Calu3 (cell line): ENCODE measurements at regions of chr6 and their contacts with region 1.

Region 1: GRCh38 chr6:166627033-166627874 is at the start of gene RPS6KA2:
- DNase-seq: peak; percentile 99
- H3K4me3 Mint-ChIP-seq: peak within 1 kb of the TSS; percentile 94
- H3K27ac Mint-ChIP-seq: peak within 1 kb of the TSS; percentile 82
- H3K4me1 Mint-ChIP-seq: peaks cover 39% of the 10 kb centered on the region
- H3K27me3 Mint-ChIP-seq: peaks cover 17% of the 10 kb centered on the region
- CTCF ChIP-seq: no peak
- total RNA-seq, gene RPS6KA2: 25.8 and 41.3 TPM in 2 replicates

Region 2: GRCh38 chr6:166275714-166276166 is 351.5 kb before region 1 on chr6:
- CTCF ChIA-PET with region 1: no interaction called
- intact Hi-C with region 1: loop called (anchors 10 kb)
- DNase-seq: peak; percentile 89
- H3K4me3 Mint-ChIP-seq: no peak overlapping the region
- H3K27ac Mint-ChIP-seq: no peak overlapping the region
- H3K4me1 Mint-ChIP-seq: peaks cover 10% of the 10 kb centered on the region
- H3K27me3 Mint-ChIP-seq: peaks cover 38% of the 10 kb centered on the region
- CTCF ChIP-seq: peak; percentile 93

Region 3: DNA sequence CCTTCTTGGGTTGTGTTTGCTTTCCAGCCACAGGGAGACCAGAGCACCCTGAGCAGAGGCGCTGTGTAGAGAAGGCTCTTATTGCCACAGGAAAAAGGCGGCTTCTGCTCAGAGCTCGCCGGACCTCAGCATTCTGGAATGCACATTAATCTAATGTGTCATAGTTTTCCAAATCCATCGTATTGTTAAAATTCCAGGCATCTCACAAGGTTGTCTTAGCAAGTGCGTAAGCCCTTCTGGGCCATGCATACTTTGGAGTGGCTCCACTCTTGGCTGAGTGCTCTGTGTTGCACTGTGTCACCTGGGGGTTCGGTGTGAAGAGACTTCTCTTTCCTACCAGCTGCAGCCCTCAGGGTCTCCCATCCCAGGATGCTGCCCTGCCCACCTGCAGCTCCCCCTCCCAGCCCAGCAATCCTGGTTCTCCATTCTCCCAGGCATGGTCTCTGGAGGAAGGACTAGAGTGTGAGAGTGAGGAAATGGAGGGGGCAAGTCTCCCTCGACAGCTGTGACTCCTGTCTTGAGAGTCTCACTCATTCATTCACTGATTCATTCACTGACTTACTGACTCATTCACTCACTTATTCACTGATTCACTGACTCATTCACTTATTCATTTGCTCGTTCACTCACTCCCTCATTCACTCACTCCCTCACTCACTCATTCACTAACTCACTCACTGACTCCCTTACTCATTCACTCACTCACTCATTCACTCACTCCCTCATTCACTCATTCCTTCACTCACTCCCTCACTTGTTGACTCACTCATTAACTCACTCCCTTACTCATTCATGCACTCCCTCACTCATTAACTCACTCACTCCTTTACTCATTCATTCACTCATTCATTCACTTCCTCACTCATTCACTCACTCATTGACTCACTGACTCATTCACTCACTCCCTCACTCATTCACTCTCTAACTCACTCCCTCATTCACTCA is 160.8 kb before region 1 on chr6:
- CTCF ChIA-PET with region 1: no interaction called
- intact Hi-C with region 1: no loop called
- DNase-seq: no peak
- H3K4me3 Mint-ChIP-seq: no peak overlapping the region
- H3K27ac Mint-ChIP-seq: no peak overlapping the region
- H3K4me1 Mint-ChIP-seq: peaks cover 9% of the 10 kb centered on the region
- H3K27me3 Mint-ChIP-seq: no peaks in the 10 kb centered on the region
- CTCF ChIP-seq: no peak

Region 4: GRCh38 chr6:166490671-166491500 is 136.4 kb before region 1 on chr6:
- CTCF ChIA-PET with region 1: interaction called, 7 read pairs
- intact Hi-C with region 1: loop called (anchors 1 kb)
- DNase-seq: peak; percentile 71
- H3K4me3 Mint-ChIP-seq: no peak overlapping the region
- H3K27ac Mint-ChIP-seq: no peak overlapping the region
- H3K4me1 Mint-ChIP-seq: peaks cover 25% of the 10 kb centered on the region
- H3K27me3 Mint-ChIP-seq: no peaks in the 10 kb centered on the region
- CTCF ChIP-seq: no peak

Region 5: GRCh38 chr6:166540631-166541331 is 86.5 kb before region 1 on chr6:
- CTCF ChIA-PET with region 1: interaction called, 4 read pairs
- intact Hi-C with region 1: loop called (anchors 5 kb)
- DNase-seq: peak; percentile 43
- H3K4me3 Mint-ChIP-seq: peak overlapping the region; percentile 69
- H3K27ac Mint-ChIP-seq: peak overlapping the region; percentile 31
- H3K4me1 Mint-ChIP-seq: peaks cover 30% of the 10 kb centered on the region
- H3K27me3 Mint-ChIP-seq: no peaks in the 10 kb centered on the region
- CTCF ChIP-seq: no peak

Region 6: DNA sequence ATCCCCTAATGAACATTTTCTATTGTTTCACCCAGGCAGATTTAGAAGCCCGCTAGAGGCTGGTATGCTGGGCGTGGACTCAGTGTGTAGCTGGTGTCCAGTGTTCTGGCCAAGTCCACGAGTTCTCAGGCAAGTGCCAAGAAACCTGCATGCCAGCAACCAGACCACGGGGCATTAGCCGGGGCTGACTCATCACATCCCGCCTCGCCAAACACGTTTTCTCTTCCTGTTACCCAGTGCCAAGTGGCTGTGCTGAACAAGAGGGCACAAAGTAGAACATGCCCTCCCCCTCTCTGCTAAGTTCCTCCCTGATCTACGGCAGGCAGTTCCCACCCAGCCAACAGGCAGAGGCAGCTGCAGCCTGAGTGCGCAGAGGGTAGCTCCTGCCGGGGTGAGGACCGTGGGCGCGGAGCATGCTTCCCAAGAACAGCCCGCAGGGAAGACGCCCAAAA is 70.4 kb before region 1 on chr6:
- CTCF ChIA-PET with region 1: interaction called, 7 read pairs
- intact Hi-C with region 1: loop called (anchors 2 kb)
- DNase-seq: peak; percentile 94
- H3K4me3 Mint-ChIP-seq: peak overlapping the region; percentile 47
- H3K27ac Mint-ChIP-seq: peak overlapping the region; percentile 81
- H3K4me1 Mint-ChIP-seq: peaks cover 53% of the 10 kb centered on the region
- H3K27me3 Mint-ChIP-seq: no peaks in the 10 kb centered on the region
- CTCF ChIP-seq: no peak

Region 7: GRCh38 chr6:166736634-166737033 is 109.4 kb after region 1 on chr6:
- CTCF ChIA-PET with region 1: no interaction called
- intact Hi-C with region 1: loop called (anchors 2 kb)
- DNase-seq: peak; percentile 45
- H3K4me3 Mint-ChIP-seq: peak overlapping the region; percentile 38
- H3K27ac Mint-ChIP-seq: peak overlapping the region; percentile 91
- H3K4me1 Mint-ChIP-seq: peaks cover 33% of the 10 kb centered on the region
- H3K27me3 Mint-ChIP-seq: no peaks in the 10 kb centered on the region
- CTCF ChIP-seq: no peak

Region 8: DNA sequence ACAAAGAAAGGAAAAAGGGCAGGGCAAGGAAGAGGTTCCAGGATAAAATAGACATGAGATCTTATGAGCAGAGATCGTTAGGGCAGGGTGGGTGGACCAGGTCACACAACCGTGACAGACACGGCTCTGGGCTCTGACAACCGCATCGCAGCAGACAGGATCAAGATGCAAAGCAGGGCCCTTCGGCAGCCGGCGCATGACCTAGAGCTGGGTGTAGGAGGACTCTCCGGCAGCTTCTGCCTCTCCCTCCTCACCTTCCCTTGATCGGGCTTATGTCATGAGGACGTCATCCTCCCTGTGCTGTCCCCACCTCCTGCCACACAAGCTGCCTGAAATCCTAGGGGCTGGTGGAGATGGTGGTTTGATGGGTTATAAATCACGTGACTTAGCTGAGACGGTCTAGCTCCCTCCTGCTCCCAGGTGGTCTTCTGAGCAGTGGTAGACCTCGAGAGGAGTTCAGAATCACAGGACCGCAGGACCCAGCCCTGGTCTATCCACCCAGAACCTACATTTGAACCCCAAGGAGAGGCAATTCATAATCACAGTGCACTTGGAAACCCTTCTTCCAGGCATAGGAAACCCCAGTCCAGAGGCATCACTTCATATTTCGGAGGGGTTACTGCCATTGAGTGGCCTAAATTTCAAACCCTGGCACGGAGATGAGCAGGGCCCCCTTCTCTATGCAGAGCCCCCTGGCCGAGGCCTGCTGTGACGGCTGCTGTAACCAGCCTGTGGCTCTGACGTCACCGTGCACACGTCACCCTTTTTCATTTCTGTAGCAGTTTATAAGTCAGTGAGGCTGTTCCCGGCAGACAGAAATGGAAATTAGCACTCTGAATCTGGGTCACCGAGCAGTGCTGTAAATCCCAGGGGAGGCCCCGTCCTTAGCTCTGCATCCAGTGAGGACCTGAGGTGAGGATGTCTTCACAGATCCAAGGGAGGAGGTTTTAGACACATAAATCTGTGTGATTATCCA is 487.0 kb after region 1 on chr6:
- CTCF ChIA-PET with region 1: no interaction called
- intact Hi-C with region 1: no loop called
- DNase-seq: no peak
- H3K4me3 Mint-ChIP-seq: no peak overlapping the region
- H3K27ac Mint-ChIP-seq: no peak overlapping the region
- H3K4me1 Mint-ChIP-seq: peaks cover 9% of the 10 kb centered on the region
- H3K27me3 Mint-ChIP-seq: peaks cover 100% of the 10 kb centered on the region
- CTCF ChIP-seq: no peak